ENCODE measurements at regions of chr7 and their contacts with region 1.

Region 1: GRCh38 chr7:128425850-128426249 is 16.1 kb upstream of the IMPDH1 start:
- DNase-seq: peak; percentile 69
- ATAC-seq: peak in 1 of 2 donors; percentile 68

Region 2: GRCh38 chr7:128398016-128398840 is 27.6 kb before region 1 on chr7:
- intact Hi-C with region 1: loop called in 1 of 2 experiments (anchors 1 kb)
- DNase-seq: peak; percentile 49
- ATAC-seq: peak; percentile 53 to 63

Region 3: DNA sequence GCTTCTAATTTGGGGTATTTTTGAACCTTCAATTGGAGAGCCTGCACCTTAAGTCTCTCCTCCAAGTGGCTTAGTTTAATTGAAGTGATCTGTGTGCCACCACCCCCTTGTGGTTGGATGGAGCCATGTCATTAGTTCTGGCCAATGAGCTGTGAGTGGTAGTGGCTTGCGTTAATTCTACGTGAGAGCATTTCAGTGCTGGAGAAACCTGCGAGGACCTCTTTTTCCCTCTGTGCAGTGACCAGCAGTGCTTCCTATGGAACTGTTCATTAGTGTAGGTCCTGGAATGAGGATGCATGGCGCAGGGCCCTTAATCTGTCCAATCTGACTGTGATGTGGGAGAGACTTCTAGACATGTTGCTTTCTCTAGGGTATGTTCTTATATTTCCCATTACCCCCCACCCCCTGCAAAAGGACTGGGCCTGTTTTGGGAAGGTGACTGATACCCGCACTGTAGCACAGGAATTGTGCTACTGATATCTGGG is 33.6 kb after region 1 on chr7:
- intact Hi-C with region 1: loop called (anchors 1 to 2 kb)
- DNase-seq: peak; percentile 50
- ATAC-seq: peak in 1 of 2 donors; percentile 13

Measured in left cardiac atrium (tissue), 4 donors.